GM12878 (cell line): ENCODE measurements at regions of chr3 and their contacts with region 1.

Region 1: GRCh38 chr3:56753206-56753820 is 48.4 kb downstream of the ARHGEF3 start:
- DNase-seq: peak; percentile 87
- ATAC-seq: peak; percentile 96
- H3K4me3 ChIP-seq: peak overlapping the region; percentile 43; the same call in 1 of the 2 replicates
- H3K27ac ChIP-seq: peak overlapping the region; percentile 70
- H3K4me1 ChIP-seq: peaks cover 48% of the 10 kb centered on the region
- H3K27me3 ChIP-seq: no peaks in the 10 kb centered on the region
- CTCF ChIP-seq: no peak; a peak in 1 of 6 replicates
- EP300 ChIP-seq: peak; percentile 68 to 79; a peak in 3 of 4 replicates
- POLR2A ChIP-seq: no peak
- RAD21 ChIP-seq: 0 out of 2 replicates have a peak, but pooled peaks have one; percentile 7

Region 2: DNA sequence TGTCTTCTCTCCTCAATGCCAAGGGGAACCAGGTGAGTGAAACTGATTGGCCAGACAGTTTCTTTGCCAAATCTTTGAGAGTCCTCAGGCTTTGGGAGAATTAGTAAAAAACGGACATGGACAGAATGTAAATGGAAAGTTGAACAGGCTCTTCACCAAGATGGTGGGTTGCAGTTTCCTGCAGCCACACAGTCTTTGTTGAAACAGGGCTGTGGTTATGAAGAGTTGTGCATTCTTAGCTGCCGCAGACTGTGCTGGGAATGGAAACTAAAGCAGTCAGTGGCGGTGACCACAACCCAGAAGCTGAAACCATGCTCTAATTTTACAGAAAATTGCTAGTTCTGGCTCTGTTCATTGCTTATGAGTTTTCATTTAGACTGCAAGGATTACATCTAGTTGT is 28.1 kb before region 1 on chr3:
- CTCF ChIA-PET with region 1: interaction called, 35 read pairs
- POLR2A ChIA-PET with region 1: interaction called, 15 read pairs
- RAD21 ChIA-PET with region 1: interaction called, 56 read pairs
- SMC1A ChIA-PET with region 1: interaction called, 93 read pairs
- in situ Hi-C with region 1: no loop called
- intact Hi-C with region 1: loop called (anchors 1 kb)
- DNase-seq: peak; percentile 87
- ATAC-seq: peak; percentile 95
- H3K4me3 ChIP-seq: peak overlapping the region; percentile 34
- H3K27ac ChIP-seq: peak overlapping the region; percentile 70
- H3K4me1 ChIP-seq: peaks cover 26% of the 10 kb centered on the region
- H3K27me3 ChIP-seq: no peaks in the 10 kb centered on the region
- CTCF ChIP-seq: no peak
- EP300 ChIP-seq: peak in 1 of 2 experiments; percentile 78; a peak in 1 of 4 replicates
- POLR2A ChIP-seq: no peak
- RAD21 ChIP-seq: peak; percentile 15; the same call in 1 of the 2 replicates

Region 3: DNA sequence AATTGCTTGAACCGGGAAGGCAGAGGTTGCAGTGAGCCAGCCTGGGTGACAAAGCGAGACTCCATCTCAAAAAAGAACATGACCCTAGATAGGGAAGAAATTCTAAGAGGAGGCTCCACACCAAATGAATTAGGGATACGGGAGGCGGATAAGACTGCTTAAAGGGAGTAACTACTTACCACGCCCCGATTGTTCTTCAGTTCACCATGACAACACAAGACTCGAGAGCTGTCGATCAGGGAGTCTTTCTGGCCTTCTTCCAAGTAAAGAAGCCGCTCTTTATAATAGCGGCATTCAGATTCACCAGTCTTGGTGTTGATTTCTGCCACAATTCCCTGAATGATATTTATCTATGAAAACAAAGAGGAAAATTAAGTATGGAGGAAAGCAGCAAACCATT is 16.3 kb before region 1 on chr3:
- CTCF ChIA-PET with region 1: interaction called, 5 read pairs
- POLR2A ChIA-PET with region 1: interaction called, 3 read pairs
- RAD21 ChIA-PET with region 1: interaction called, 3 read pairs
- SMC1A ChIA-PET with region 1: interaction called, 11 read pairs
- in situ Hi-C with region 1: no loop called
- intact Hi-C with region 1: no loop called
- DNase-seq: no peak
- ATAC-seq: no peak
- H3K4me3 ChIP-seq: no peak overlapping the region
- H3K27ac ChIP-seq: no peak overlapping the region
- H3K4me1 ChIP-seq: no peaks in the 10 kb centered on the region
- H3K27me3 ChIP-seq: no peaks in the 10 kb centered on the region
- CTCF ChIP-seq: no peak
- EP300 ChIP-seq: no peak
- POLR2A ChIP-seq: no peak
- RAD21 ChIP-seq: no peak

Region 4: DNA sequence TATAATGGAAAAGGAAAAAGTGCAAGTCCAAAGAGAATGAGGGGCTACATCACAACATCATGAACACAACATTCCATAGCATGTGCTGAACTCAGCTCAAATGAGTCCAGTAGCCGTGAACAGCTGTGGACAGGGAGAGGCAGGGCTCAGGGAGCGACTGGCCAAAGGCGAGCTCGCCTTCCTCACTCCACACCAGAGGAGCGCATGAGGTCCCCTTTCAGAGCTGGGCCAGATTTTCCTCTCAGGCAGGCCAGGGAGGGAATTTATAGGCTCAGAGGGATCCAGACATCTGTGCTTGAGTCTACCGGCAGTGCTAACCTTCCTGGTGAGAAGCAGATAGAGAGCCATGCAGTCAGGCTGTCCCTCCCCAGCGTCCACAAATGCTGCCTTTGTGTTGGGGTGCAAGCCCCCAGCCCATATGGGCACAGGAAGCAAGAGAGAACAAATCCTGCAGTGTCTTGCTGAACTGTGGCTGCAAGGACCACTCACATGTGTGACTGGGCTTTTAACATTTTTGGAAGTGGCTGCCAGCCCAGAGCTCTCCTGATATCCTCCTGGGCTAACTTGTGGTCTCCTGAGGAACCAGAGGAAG is 15.9 kb after region 1 on chr3:
- CTCF ChIA-PET with region 1: interaction called, 6 read pairs
- POLR2A ChIA-PET with region 1: interaction called, 6 read pairs
- RAD21 ChIA-PET with region 1: interaction called, 14 read pairs
- SMC1A ChIA-PET with region 1: interaction called, 62 read pairs
- in situ Hi-C with region 1: no loop called
- intact Hi-C with region 1: no loop called
- DNase-seq: no peak
- ATAC-seq: no peak
- H3K4me3 ChIP-seq: no peak overlapping the region
- H3K27ac ChIP-seq: no peak overlapping the region
- H3K4me1 ChIP-seq: peaks cover 7% of the 10 kb centered on the region
- H3K27me3 ChIP-seq: no peaks in the 10 kb centered on the region
- CTCF ChIP-seq: no peak
- EP300 ChIP-seq: no peak
- POLR2A ChIP-seq: no peak
- RAD21 ChIP-seq: no peak

Region 5: DNA sequence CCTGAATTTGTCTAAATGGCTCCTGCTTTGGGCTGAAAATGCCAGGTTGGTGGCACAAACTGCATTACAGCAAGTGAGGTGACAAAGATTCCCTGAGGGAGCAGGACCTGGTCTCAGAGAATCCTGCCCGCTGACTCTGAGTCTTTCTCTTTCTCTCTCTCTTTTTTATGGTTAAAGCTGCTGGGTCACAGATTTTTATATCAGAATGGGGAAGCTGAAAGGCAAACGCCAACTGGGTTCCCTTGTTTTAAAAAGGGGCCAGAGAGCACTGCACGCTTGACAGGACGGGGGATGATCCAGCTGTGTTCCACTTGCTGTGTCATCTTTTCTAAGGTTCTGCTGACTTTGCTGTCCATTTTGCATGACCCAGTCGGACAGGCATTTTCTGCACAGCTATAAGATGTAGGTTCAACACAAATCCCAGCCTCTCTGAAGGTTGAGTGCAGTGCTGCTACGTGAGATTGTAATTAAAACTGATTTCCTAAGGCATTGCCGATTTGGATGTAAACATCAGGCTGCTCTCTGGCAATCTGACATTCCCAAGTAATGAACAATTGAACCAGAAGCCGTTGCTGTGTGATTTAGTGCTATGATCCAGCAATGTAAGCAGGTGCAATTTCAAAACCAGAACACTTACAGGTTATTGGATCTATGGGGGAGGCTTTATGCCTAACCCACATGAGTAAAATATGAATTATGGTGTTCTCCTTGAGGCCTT is 22.7 kb after region 1 on chr3:
- CTCF ChIA-PET with region 1: interaction called, 7 read pairs
- POLR2A ChIA-PET with region 1: interaction called, 53 read pairs
- RAD21 ChIA-PET with region 1: interaction called, 14 read pairs
- SMC1A ChIA-PET with region 1: interaction called, 178 read pairs
- in situ Hi-C with region 1: no loop called
- intact Hi-C with region 1: no loop called
- DNase-seq: no peak
- ATAC-seq: no peak
- H3K4me3 ChIP-seq: no peak overlapping the region
- H3K27ac ChIP-seq: no peak overlapping the region
- H3K4me1 ChIP-seq: peaks cover 30% of the 10 kb centered on the region
- H3K27me3 ChIP-seq: no peaks in the 10 kb centered on the region
- CTCF ChIP-seq: no peak
- EP300 ChIP-seq: no peak
- POLR2A ChIP-seq: no peak
- RAD21 ChIP-seq: no peak

Region 6: GRCh38 chr3:56783644-56784447 is 30.5 kb after region 1 on chr3:
- CTCF ChIA-PET with region 1: interaction called, 37 read pairs
- POLR2A ChIA-PET with region 1: interaction called, 53 read pairs
- RAD21 ChIA-PET with region 1: interaction called, 62 read pairs
- SMC1A ChIA-PET with region 1: interaction called, 178 read pairs
- in situ Hi-C with region 1: no loop called
- intact Hi-C with region 1: no loop called
- DNase-seq: peak; percentile 93
- ATAC-seq: peak; percentile 92
- H3K4me3 ChIP-seq: peak overlapping the region; percentile 30; the same call in 1 of the 2 replicates
- H3K27ac ChIP-seq: peak overlapping the region; percentile 94
- H3K4me1 ChIP-seq: peaks cover 67% of the 10 kb centered on the region
- H3K27me3 ChIP-seq: no peaks in the 10 kb centered on the region
- CTCF ChIP-seq: no peak
- EP300 ChIP-seq: peak; percentile 76 to 84
- POLR2A ChIP-seq: peak; percentile 45; the same call in 1 of the 2 replicates
- RAD21 ChIP-seq: peak; percentile 25; the same call in 1 of the 2 replicates

Region 7: DNA sequence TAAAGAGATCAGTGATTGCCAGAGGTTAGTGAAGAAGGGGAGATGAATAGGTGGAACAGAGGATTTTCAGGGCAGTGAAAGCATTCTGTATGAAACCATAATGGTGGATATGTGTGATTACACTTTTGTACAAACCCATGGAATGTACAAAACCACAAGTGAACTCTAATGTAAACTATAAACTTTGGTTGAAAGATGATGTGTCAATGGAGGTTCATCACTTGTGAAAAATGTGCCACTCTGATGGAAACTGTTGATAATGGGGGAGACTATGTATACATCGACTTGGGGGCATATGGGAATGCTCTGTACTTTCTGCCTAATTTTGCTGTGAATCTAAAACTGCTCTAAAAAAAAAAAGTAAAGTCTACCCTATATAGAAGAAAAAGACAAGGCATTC is 117.1 kb after region 1 on chr3:
- CTCF ChIA-PET with region 1: no interaction called
- POLR2A ChIA-PET with region 1: no interaction called
- RAD21 ChIA-PET with region 1: no interaction called
- SMC1A ChIA-PET with region 1: no interaction called
- in situ Hi-C with region 1: no loop called
- intact Hi-C with region 1: no loop called
- DNase-seq: no peak
- ATAC-seq: no peak
- H3K4me3 ChIP-seq: no peak overlapping the region
- H3K27ac ChIP-seq: no peak overlapping the region
- H3K4me1 ChIP-seq: no peaks in the 10 kb centered on the region
- H3K27me3 ChIP-seq: no peaks in the 10 kb centered on the region
- CTCF ChIP-seq: no peak
- EP300 ChIP-seq: no peak
- POLR2A ChIP-seq: no peak
- RAD21 ChIP-seq: no peak

Region 8: GRCh38 chr3:57256844-57257243 is 503.5 kb after region 1 on chr3:
- CTCF ChIA-PET with region 1: no interaction called
- POLR2A ChIA-PET with region 1: no interaction called
- RAD21 ChIA-PET with region 1: no interaction called
- SMC1A ChIA-PET with region 1: no interaction called
- in situ Hi-C with region 1: no loop called
- intact Hi-C with region 1: no loop called
- DNase-seq: no peak
- ATAC-seq: no peak
- H3K4me3 ChIP-seq: no peak overlapping the region
- H3K27ac ChIP-seq: no peak overlapping the region
- H3K4me1 ChIP-seq: no peaks in the 10 kb centered on the region
- H3K27me3 ChIP-seq: no peaks in the 10 kb centered on the region
- CTCF ChIP-seq: no peak
- EP300 ChIP-seq: no peak
- POLR2A ChIP-seq: no peak
- RAD21 ChIP-seq: no peak